Thyroid gland (tissue), 4 donors: ENCODE measurements at regions of chr1 and their contacts with region 1.

Region 1: DNA sequence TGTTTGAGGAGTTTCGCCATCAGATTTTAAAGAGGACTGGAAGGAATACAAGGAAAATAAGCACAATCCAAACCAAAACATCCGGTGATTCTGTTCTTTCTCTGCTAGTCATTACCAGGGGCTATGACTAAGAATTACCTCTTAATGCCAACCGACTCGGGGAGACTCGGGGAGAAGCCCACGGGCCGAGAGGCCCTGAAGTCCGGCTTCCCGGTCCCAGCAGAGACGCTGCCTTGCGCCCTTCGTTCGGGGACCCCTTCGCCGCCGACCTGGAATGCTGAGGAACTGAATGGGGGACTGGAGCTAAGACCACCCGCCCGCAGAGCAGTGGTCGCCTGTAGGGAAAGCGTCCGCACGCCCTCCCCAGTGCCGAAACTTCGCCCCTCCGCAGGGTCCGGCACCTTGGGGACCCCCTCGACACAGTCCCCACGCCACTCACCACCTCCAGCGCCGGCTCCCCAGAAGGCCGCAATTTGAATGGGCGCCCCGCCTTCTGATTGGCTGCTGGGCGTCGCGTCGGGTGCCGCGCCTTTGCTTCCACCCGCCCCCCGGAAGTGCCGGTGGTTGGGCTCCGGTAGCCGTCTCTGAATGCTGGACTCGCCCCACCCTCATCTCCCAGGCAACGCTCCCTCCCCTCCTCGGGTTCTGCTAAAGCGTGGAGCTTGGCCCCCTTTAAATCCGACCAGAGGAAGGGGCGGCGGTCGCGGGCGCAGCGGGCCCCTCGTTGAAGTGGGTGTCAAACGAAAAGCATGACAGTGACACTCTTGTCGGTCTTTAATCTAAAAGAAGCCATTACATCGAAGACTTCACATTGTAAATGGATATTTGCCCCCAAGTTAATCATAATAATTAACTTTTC is at the start of gene KIF14:
- DNase-seq: peak; percentile 93
- H3K4me3 ChIP-seq: peak within 1 kb of the TSS in 2 of 3 donors; percentile 47 to 81
- H3K27ac ChIP-seq: no peak within 1 kb of the TSS
- H3K4me1 ChIP-seq: peaks cover 0 to 7% of the 10 kb centered on the region in 2 donors
- H3K27me3 ChIP-seq: no peaks in the 10 kb centered on the region
- CTCF ChIP-seq: no peak
- POLR2A ChIP-seq: no peak
- total RNA-seq, gene KIF14: 0.05 to 0.42 (median 0.18) TPM

Region 2: DNA sequence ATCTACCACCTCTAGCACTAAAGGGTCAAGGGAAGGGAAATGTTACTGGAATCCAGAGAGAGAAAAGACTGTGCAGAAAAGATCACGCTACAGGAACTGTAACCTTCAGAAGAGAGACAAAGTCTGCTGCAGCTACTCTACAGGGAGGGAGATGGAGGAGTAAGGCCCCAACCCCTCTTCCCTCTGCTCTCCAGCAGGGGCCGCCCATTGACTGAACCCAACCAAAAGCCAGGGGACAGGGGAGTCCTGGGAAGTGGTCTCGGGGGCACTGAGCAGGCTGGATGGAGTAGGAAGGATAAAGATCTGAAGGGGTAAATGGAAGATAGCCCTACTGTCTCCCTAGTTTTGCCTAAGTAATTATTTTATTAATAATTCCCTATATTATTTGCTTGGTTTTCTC is 665.8 kb before region 1 on chr1:
- intact Hi-C with region 1: no loop called
- DNase-seq: no peak
- H3K4me3 ChIP-seq: no peak overlapping the region
- H3K27ac ChIP-seq: no peak overlapping the region
- H3K4me1 ChIP-seq: no peaks in the 10 kb centered on the region
- H3K27me3 ChIP-seq: no peaks in the 10 kb centered on the region
- CTCF ChIP-seq: peak in 1 of 6 experiments; percentile 11
- POLR2A ChIP-seq: no peak

Region 3: DNA sequence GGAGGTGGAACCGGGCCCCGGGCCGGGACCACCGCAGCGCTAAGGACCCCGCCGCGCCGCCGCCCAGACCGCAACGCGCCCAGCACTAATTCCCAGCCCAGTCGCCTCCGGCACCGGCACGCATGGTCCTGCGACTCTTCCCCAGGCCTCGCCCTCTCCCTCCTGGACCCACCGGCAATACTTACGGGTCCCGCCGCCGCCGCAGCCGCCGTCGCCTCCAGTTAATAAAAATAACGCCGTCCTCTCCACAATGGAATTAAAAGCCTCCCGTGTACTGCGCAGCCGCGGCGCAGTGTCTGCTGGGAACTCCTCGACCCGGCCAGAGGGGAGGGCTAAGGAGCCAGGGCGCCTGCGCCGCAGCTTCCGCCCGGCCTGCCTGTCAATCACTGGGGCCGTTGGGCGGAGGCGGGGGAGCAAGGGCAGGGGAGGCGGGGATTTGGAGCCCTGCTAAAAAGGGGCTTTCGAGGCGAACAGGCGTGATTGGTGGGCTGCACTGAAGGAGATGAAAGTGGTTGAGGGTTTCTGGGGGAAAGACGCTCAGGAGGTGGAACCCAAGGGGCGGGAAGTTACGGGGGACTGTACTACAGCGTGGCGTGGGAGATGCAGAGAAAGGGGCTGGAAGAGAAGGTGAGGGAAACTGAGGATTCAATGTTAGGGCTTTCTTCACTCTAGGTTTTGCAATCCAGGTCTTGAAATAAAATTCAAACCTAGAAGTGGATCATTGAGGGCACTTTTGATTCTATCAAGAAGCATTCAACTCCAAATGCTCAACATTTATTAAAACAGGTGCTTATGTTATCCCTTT is 210.5 kb before region 1 on chr1 and contains the start of gene ZNF281:
- intact Hi-C with region 1: no loop called
- DNase-seq: peak; percentile 92 to 95
- H3K4me3 ChIP-seq: peak within 1 kb of the TSS; percentile 12 to 75 (median 27)
- H3K27ac ChIP-seq: peak within 1 kb of the TSS in 2 of 3 donors; percentile 50 to 84
- H3K4me1 ChIP-seq: peaks cover 28 to 32% of the 10 kb centered on the region in 2 donors
- H3K27me3 ChIP-seq: no peaks in the 10 kb centered on the region
- CTCF ChIP-seq: peak in 1 of 6 experiments; percentile 2
- POLR2A ChIP-seq: peak in 1 of 2 donors; percentile 72
- total RNA-seq, gene ZNF281: 9.8 to 16.9 (median 12.5) TPM

Region 4: GRCh38 chr1:200669314-200670241 is 49.1 kb after region 1 on chr1 and contains the start of gene DDX59:
- intact Hi-C with region 1: no loop called
- DNase-seq: peak; percentile 97
- H3K4me3 ChIP-seq: peak within 1 kb of the TSS; percentile 50 to 72 (median 54)
- H3K27ac ChIP-seq: peak within 1 kb of the TSS; percentile 98 to 100 (median 99)
- H3K4me1 ChIP-seq: peaks cover 0 to 13% of the 10 kb centered on the region in 2 donors
- H3K27me3 ChIP-seq: no peaks in the 10 kb centered on the region
- CTCF ChIP-seq: peak in 1 of 6 experiments; percentile 2
- POLR2A ChIP-seq: peak; percentile 53 to 87
- total RNA-seq, gene DDX59: 18.3 to 33.2 (median 28.7) TPM

Region 5: DNA sequence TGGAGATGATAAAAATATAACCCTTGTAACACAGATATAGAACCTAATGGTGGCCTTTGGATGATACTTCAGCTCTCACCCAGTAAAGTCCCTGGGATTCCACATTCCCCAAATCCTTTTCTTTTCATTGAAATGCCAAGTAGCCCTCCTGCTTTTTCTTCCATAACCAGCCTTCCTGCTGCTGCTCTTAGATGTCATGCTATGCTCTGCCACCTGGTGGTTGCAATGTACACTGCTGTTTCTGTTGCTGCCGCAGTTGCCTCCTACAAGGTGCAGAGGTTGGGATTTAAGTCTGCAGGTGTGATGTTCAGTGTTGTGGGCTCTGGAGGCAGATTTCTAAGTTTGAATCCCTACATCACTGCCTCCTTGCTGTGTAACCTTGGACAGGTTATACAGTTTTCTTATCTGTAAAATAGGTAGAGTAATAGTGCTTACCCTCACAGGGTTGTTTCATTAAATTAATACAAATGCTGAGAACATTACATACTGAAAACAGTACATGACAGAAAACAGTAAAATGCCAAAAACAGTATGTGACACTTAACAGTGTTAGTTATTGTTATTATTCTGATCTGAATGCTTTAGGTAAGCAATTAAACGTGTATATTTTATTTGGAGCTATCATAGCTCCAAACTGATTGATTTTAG is 182.5 kb after region 1 on chr1:
- intact Hi-C with region 1: loop called (anchors 5 kb)
- DNase-seq: peak; percentile 85
- H3K4me3 ChIP-seq: no peak overlapping the region
- H3K27ac ChIP-seq: no peak overlapping the region
- H3K4me1 ChIP-seq: peaks cover 5 to 7% of the 10 kb centered on the region in 2 donors
- H3K27me3 ChIP-seq: no peaks in the 10 kb centered on the region
- CTCF ChIP-seq: peak; percentile 72 to 96 (median 88)
- POLR2A ChIP-seq: no peak